Prostate gland (tissue), 2 donors: ENCODE measurements at regions of chr1 and their contacts with region 1.

Region 1: GRCh38 chr1:186212544-186213226 is 162.4 kb downstream of the TPR start:
- DNase-seq: peak; percentile 32
- H3K4me3 ChIP-seq: no peak overlapping the region
- H3K27ac ChIP-seq: no peak overlapping the region
- H3K4me1 ChIP-seq: no peaks in the 10 kb centered on the region
- H3K27me3 ChIP-seq: no peaks in the 10 kb centered on the region
- CTCF ChIP-seq: peak in 3 of 4 experiments; percentile 42 to 87 (median 74)
- POLR2A ChIP-seq: no peak

Region 2: GRCh38 chr1:185720633-185721272 is 491.9 kb before region 1 on chr1:
- intact Hi-C with region 1: loop called (anchors 2 kb)
- DNase-seq: no peak
- H3K4me3 ChIP-seq: no peak overlapping the region
- H3K27ac ChIP-seq: no peak overlapping the region
- H3K4me1 ChIP-seq: no peaks in the 10 kb centered on the region
- H3K27me3 ChIP-seq: no peaks in the 10 kb centered on the region
- CTCF ChIP-seq: peak; percentile 23 to 62 (median 40)
- POLR2A ChIP-seq: no peak

Region 3: GRCh38 chr1:185816460-185816859 is 396.2 kb before region 1 on chr1:
- intact Hi-C with region 1: loop called (anchors 5 kb)
- DNase-seq: no peak
- H3K4me3 ChIP-seq: no peak overlapping the region
- H3K27ac ChIP-seq: no peak overlapping the region
- H3K4me1 ChIP-seq: no peaks in the 10 kb centered on the region
- H3K27me3 ChIP-seq: no peaks in the 10 kb centered on the region
- CTCF ChIP-seq: no peak
- POLR2A ChIP-seq: no peak

Region 4: GRCh38 chr1:186255266-186255665 is 42.6 kb after region 1 on chr1:
- intact Hi-C with region 1: no loop called
- DNase-seq: no peak
- H3K4me3 ChIP-seq: no peak overlapping the region
- H3K27ac ChIP-seq: no peak overlapping the region
- H3K4me1 ChIP-seq: no peaks in the 10 kb centered on the region
- H3K27me3 ChIP-seq: no peaks in the 10 kb centered on the region
- CTCF ChIP-seq: no peak
- POLR2A ChIP-seq: no peak